ENCODE measurements at regions of chr7 and their contacts with region 1.

Region 1: DNA sequence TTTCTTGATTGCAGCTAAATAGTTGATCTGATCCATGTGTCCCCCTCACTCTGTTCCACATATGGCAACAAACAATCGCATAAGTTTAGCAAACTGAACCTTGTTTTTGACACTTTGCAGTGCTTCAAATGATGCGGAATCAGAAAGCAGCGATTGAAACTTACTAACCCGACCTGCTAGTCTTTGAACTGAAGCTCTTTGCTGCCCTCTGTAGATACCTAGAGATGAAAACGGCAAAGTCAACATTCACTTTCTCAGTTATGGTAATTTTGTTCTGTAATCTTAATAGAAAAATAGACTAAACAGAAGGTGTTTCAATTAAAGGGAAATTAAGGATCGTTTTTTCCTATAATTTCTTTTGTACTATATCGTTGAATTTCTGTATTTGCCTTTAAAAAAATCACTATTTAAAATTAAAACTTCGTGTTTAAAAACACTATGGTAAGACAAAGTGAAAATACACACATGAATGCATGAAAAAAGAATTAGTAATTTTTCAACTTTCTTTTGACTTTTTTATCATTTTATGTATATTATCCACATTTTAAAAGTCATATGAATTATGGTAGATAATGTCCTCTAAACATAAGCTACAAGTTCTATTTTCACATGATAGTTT is 276.5 kb downstream of the MAGI2 start:
- DNase-seq: peak; percentile 66
- ATAC-seq: peak; percentile 79
- H3K4me3 ChIP-seq: no peak overlapping the region
- H3K27ac ChIP-seq: no peak overlapping the region
- H3K4me1 ChIP-seq: no peaks in the 10 kb centered on the region
- H3K27me3 ChIP-seq: no peaks in the 10 kb centered on the region
- CTCF ChIP-seq: peak; percentile 84

Region 2: GRCh38 chr7:77940647-77941046 is 1236.3 kb before region 1 on chr7:
- CTCF ChIA-PET with region 1: no interaction called
- POLR2A ChIA-PET with region 1: no interaction called
- intact Hi-C with region 1: loop called (anchors 10 kb)
- DNase-seq: peak; percentile 45
- ATAC-seq: peak; percentile 59
- H3K4me3 ChIP-seq: no peak overlapping the region
- H3K27ac ChIP-seq: no peak overlapping the region
- H3K4me1 ChIP-seq: no peaks in the 10 kb centered on the region
- H3K27me3 ChIP-seq: no peaks in the 10 kb centered on the region
- CTCF ChIP-seq: peak; percentile 79

Region 3: DNA sequence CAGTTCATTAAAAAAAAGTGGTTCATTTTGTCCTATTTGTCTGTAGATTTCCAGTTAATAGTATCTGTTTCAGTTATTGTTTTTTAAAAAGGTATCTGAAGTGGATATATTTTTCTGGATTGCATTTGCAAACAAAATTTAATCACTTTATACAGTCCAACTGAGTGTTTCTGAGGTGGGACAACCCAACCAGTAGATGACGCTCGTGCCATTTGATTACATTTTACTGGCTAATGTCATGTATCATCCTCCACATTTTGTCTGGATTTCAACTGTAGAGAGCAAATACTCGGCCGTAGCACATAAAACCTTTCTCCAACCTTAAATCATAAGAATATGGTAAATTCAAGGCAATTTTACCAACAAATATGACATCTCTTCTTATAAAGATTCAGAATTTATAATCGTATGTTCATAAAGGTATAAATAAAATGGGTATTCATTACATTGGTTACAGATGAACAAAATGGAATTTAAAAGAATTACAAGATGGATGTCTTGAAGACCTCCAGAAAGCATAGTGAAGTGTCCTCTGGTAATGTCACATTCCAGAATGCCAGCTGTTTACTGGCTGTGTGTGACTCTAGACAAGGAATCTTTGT is 589.4 kb before region 1 on chr7:
- CTCF ChIA-PET with region 1: no interaction called
- POLR2A ChIA-PET with region 1: no interaction called
- intact Hi-C with region 1: loop called (anchors 1 kb)
- DNase-seq: peak; percentile 70
- ATAC-seq: peak; percentile 71
- H3K4me3 ChIP-seq: no peak overlapping the region
- H3K27ac ChIP-seq: no peak overlapping the region
- H3K4me1 ChIP-seq: no peaks in the 10 kb centered on the region
- H3K27me3 ChIP-seq: peaks cover 4% of the 10 kb centered on the region; the same call in 1 of the 2 replicates
- CTCF ChIP-seq: peak; percentile 88

Region 4: GRCh38 chr7:78924581-78924980 is 252.4 kb before region 1 on chr7:
- CTCF ChIA-PET with region 1: no interaction called
- POLR2A ChIA-PET with region 1: no interaction called
- intact Hi-C with region 1: loop called (anchors 1 kb)
- DNase-seq: peak; percentile 50
- ATAC-seq: no peak; the same call in 1 of the 2 replicates
- H3K4me3 ChIP-seq: no peak overlapping the region
- H3K27ac ChIP-seq: no peak overlapping the region
- H3K4me1 ChIP-seq: no peaks in the 10 kb centered on the region
- H3K27me3 ChIP-seq: no peaks in the 10 kb centered on the region; the same call in 1 of the 2 replicates
- CTCF ChIP-seq: peak; percentile 18; the same call in 1 of the 2 replicates

Region 5: GRCh38 chr7:79096361-79096805 is 80.6 kb before region 1 on chr7:
- CTCF ChIA-PET with region 1: no interaction called
- POLR2A ChIA-PET with region 1: no interaction called
- intact Hi-C with region 1: loop called (anchors 2 kb)
- DNase-seq: peak; percentile 89
- ATAC-seq: peak; percentile 97
- H3K4me3 ChIP-seq: no peak overlapping the region
- H3K27ac ChIP-seq: peak overlapping the region; percentile 87
- H3K4me1 ChIP-seq: peaks cover 21% of the 10 kb centered on the region
- H3K27me3 ChIP-seq: no peaks in the 10 kb centered on the region
- CTCF ChIP-seq: no peak

Region 6: DNA sequence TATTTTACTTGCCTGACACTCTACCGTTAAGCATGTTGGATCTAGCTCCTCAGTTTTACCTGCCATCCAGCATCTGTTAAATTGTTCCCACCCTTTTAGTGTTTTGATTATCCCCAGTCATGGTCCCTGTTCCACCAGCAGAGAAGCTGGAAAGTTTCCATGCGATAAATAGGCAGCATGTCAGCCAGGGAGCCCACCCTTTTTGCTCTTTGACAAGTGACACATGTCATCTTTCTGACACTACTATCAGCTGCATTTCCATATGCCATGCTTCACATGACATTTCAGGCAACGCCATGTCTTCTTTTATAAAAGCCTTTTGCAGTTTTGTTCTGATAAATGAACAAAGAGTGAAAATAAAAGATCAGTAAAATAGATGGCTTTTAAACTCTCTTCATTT is 34.3 kb before region 1 on chr7:
- CTCF ChIA-PET with region 1: no interaction called
- POLR2A ChIA-PET with region 1: no interaction called
- intact Hi-C with region 1: no loop called
- DNase-seq: no peak
- ATAC-seq: no peak
- H3K4me3 ChIP-seq: no peak overlapping the region
- H3K27ac ChIP-seq: no peak overlapping the region
- H3K4me1 ChIP-seq: peaks cover 6% of the 10 kb centered on the region; the same call in 1 of the 2 replicates
- H3K27me3 ChIP-seq: no peaks in the 10 kb centered on the region
- CTCF ChIP-seq: no peak